Calu3 (cell line): ENCODE measurements at regions of chr11 and their contacts with region 1.

Region 1: GRCh38 chr11:104956528-104956927 is 11.8 kb downstream of the CASP4 start:
- DNase-seq: no peak
- H3K4me3 Mint-ChIP-seq: no peak overlapping the region
- H3K27ac Mint-ChIP-seq: no peak overlapping the region
- H3K4me1 Mint-ChIP-seq: peaks cover 15% of the 10 kb centered on the region
- H3K27me3 Mint-ChIP-seq: no peaks in the 10 kb centered on the region
- CTCF ChIP-seq: no peak

Region 2: GRCh38 chr11:104564921-104565582 is 391.5 kb before region 1 on chr11:
- CTCF ChIA-PET with region 1: no interaction called
- intact Hi-C with region 1: no loop called
- DNase-seq: no peak
- H3K4me3 Mint-ChIP-seq: peak overlapping the region; percentile 6
- H3K27ac Mint-ChIP-seq: peak overlapping the region; percentile 75
- H3K4me1 Mint-ChIP-seq: peaks cover 14% of the 10 kb centered on the region
- H3K27me3 Mint-ChIP-seq: no peaks in the 10 kb centered on the region
- CTCF ChIP-seq: no peak

Region 3: GRCh38 chr11:105466582-105467228 is 510.2 kb after region 1 on chr11:
- CTCF ChIA-PET with region 1: no interaction called
- intact Hi-C with region 1: loop called (anchors 5 kb)
- DNase-seq: peak; percentile 22
- H3K4me3 Mint-ChIP-seq: no peak overlapping the region
- H3K27ac Mint-ChIP-seq: no peak overlapping the region
- H3K4me1 Mint-ChIP-seq: no peaks in the 10 kb centered on the region
- H3K27me3 Mint-ChIP-seq: no peaks in the 10 kb centered on the region
- CTCF ChIP-seq: no peak

Region 4: DNA sequence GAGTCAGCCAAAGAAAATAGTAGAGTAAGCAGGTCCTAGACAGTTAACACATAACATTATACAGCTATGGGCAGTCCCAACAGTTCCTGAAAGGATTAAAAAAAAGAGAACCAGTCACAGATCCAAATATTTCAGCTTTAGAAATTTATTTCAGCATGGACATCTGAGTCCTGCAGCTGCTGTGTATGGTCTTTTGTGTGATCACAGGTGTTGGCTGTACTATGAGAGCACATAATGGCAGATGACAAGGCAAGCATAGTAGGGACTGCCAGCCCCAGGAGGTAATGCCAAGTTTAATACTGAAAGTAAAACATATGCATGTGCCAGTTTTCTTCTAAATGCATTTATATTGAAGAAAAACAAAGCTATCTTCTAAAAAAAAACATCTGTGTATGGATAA is 811.4 kb after region 1 on chr11:
- CTCF ChIA-PET with region 1: no interaction called
- intact Hi-C with region 1: no loop called
- DNase-seq: no peak
- H3K4me3 Mint-ChIP-seq: no peak overlapping the region
- H3K27ac Mint-ChIP-seq: no peak overlapping the region
- H3K4me1 Mint-ChIP-seq: no peaks in the 10 kb centered on the region
- H3K27me3 Mint-ChIP-seq: no peaks in the 10 kb centered on the region
- CTCF ChIP-seq: no peak